ENCODE measurements at regions of chr4 and their contacts with region 1.

Region 1: DNA sequence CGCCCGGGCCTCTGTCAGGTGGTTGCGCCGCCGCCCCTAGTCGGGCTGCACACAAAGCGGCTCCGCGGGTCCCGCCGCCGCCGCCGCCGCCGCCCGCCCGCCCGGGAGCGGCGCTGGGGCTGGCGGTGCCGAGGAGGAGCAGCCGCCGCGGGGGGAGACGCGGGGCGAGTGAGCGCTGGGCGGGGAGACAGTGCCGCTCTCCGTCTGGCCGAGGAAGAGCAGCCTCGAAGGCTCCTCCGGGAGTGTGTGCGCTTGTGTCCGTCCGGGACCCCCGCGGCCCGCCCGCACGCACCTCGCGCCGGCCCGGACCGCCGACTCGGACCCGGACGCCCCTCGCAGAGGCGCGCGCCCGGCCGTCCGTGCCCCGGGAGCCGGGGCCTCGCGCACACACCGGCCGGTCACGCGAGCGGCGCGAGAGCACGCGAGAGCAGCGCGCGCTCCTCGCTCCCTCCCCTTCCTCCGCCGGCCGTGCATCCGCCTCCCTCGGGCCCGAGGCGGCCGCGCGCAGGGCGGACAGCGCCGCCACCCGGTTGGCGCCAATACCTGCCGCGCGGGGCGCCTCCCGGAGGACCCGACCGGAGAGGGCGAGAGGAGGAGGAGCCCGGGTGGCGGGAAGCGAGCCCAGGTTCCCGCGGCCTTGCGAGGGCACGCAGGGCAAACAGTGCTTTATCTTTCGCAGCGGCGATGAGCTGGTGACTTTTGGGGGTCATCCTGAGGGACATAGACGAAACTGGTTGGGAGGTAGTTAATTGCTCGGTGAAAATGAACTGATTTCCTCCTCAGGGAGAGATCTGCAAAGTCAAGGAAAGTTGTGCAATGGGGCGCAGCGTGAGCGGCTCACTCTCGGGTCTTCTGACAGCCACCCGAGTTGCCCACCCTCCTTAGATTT is at the start of gene PDS5A:
- DNase-seq: peak; percentile 56
- ATAC-seq: peak; percentile 82
- H3K4me3 ChIP-seq: peak within 1 kb of the TSS; percentile 93
- H3K27ac ChIP-seq: peak within 1 kb of the TSS; percentile 95
- H3K4me1 ChIP-seq: peaks cover 3% of the 10 kb centered on the region
- H3K27me3 ChIP-seq: no peaks in the 10 kb centered on the region
- CTCF ChIP-seq: peak; percentile 84 to 99 (median 94)
- EP300 ChIP-seq: no peak
- POLR2A ChIP-seq: peak; percentile 79
- RAD21 ChIP-seq: peak; percentile 69
- polyA plus RNA-seq, gene PDS5A: 13.7 to 14.1 TPM

Region 2: DNA sequence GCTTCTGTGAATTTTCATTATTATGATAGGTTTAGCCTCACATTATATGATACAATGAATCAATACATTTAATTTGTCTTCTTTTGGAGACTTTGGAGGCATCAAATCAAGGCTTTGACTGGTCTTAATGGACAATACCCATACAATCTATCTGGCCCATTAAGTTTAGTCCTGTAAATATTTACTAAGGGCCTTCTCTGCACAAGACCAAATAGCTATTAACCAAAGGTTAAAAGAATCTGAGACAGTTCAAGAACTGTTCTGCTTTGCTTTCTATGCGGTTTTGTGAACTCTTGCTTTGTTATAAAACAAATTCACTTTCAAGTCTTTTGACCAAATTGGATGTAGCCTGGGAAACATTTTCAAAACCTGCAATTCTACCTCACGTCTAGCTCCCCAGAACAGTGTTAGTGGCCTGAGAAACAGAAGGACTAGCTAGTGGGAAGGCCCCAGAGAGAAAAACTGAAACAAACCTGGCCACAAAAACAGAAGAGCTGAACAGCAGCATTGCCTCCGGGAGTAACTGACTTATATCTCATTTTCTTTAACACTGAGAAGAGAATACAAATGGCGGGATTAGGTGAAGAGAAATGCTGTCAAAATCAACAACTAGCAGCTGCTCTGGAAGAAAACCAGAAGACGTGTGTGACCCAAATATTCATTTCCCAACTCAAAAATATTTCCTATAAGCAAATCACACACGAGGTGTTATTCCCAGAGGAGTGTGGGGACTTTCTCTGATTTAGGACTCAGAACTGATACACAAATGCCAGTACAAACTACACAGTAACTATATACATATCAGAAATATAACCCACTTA is 1173.7 kb before region 1 on chr4:
- CTCF ChIA-PET with region 1: no interaction called
- POLR2A ChIA-PET with region 1: no interaction called
- RAD21 ChIA-PET with region 1: no interaction called
- SMC1A ChIA-PET with region 1: no interaction called
- in situ Hi-C with region 1: no loop called
- intact Hi-C with region 1: no loop called
- DNase-seq: peak; percentile 99
- ATAC-seq: peak; percentile 74
- H3K4me3 ChIP-seq: peak overlapping the region; percentile 41
- H3K27ac ChIP-seq: peak overlapping the region; percentile 86
- H3K4me1 ChIP-seq: peaks cover 20% of the 10 kb centered on the region
- H3K27me3 ChIP-seq: no peaks in the 10 kb centered on the region
- CTCF ChIP-seq: no peak
- EP300 ChIP-seq: peak; percentile 77 to 92; a peak in 3 of 4 replicates
- POLR2A ChIP-seq: no peak
- RAD21 ChIP-seq: peak; percentile 15

Region 3: DNA sequence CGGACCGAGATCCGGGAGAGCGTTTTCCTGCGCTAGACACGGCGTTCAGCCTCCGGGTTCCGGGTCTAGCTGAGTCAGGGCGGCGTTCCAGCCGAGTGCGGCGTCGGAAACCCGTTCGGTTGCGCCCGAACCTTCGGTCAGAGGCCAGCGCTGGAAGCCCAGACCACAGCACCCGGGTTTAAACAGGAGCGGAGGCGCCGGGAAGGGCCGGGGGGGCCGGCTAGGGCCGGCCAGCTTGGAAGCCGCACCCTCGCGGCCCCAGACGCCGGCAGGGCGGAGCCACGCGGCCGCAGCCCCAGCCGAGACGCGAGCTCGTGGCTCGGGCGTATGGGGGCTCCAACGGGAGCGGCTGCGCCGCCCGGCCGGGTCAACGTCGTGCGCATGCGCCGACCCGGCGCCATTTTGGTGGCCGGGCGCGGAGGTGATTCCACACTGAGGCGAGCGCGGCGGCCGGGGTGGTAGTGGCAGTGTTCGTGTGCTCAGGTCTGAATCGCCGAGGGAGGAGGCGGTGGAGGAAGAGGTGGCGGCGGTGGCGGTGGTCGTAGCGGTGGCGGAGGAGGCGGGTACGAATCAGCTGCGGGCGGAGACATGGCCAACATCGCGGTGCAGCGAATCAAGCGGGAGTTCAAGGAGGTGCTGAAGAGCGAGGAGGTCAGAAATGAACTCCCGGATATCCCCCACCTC is 279.9 kb before region 1 on chr4 and contains the start of gene UBE2K:
- CTCF ChIA-PET with region 1: interaction called, 30 read pairs
- POLR2A ChIA-PET with region 1: interaction called, 7 read pairs
- RAD21 ChIA-PET with region 1: interaction called, 8 read pairs
- SMC1A ChIA-PET with region 1: interaction called, 11 read pairs
- in situ Hi-C with region 1: no loop called
- intact Hi-C with region 1: loop called (anchors 1 kb)
- DNase-seq: no peak
- ATAC-seq: peak; percentile 94
- H3K4me3 ChIP-seq: peak within 1 kb of the TSS; percentile 96
- H3K27ac ChIP-seq: peak within 1 kb of the TSS; percentile 92
- H3K4me1 ChIP-seq: peaks cover 4% of the 10 kb centered on the region
- H3K27me3 ChIP-seq: no peaks in the 10 kb centered on the region
- CTCF ChIP-seq: no peak
- EP300 ChIP-seq: no peak
- POLR2A ChIP-seq: peak; percentile 98
- RAD21 ChIP-seq: no peak
- polyA plus RNA-seq, gene UBE2K: 54.3 to 96.4 TPM

Region 4: GRCh38 chr4:39754309-39754708 is 223.4 kb before region 1 on chr4:
- CTCF ChIA-PET with region 1: no interaction called
- POLR2A ChIA-PET with region 1: no interaction called
- RAD21 ChIA-PET with region 1: no interaction called
- SMC1A ChIA-PET with region 1: no interaction called
- in situ Hi-C with region 1: no loop called
- intact Hi-C with region 1: no loop called
- DNase-seq: no peak
- ATAC-seq: no peak; the same call in 1 of the 3 replicates
- H3K4me3 ChIP-seq: no peak overlapping the region
- H3K27ac ChIP-seq: peak overlapping the region; percentile 43; the same call in 1 of the 2 replicates
- H3K4me1 ChIP-seq: peaks cover 13% of the 10 kb centered on the region
- H3K27me3 ChIP-seq: no peaks in the 10 kb centered on the region
- CTCF ChIP-seq: no peak
- EP300 ChIP-seq: no peak
- POLR2A ChIP-seq: no peak
- RAD21 ChIP-seq: no peak

Region 5: GRCh38 chr4:39864403-39864802 is 113.3 kb before region 1 on chr4:
- CTCF ChIA-PET with region 1: interaction called, 4 read pairs
- POLR2A ChIA-PET with region 1: no interaction called
- RAD21 ChIA-PET with region 1: no interaction called
- SMC1A ChIA-PET with region 1: interaction called, 4 read pairs
- in situ Hi-C with region 1: no loop called
- intact Hi-C with region 1: loop called (anchors 10 kb)
- DNase-seq: no peak
- ATAC-seq: no peak
- H3K4me3 ChIP-seq: no peak overlapping the region
- H3K27ac ChIP-seq: no peak overlapping the region
- H3K4me1 ChIP-seq: peaks cover 8% of the 10 kb centered on the region; the same call in 1 of the 2 replicates
- H3K27me3 ChIP-seq: no peaks in the 10 kb centered on the region
- CTCF ChIP-seq: no peak
- EP300 ChIP-seq: no peak
- POLR2A ChIP-seq: no peak
- RAD21 ChIP-seq: no peak

Region 6: GRCh38 chr4:39913471-39913870 is 64.3 kb before region 1 on chr4:
- CTCF ChIA-PET with region 1: interaction called, 4 read pairs
- POLR2A ChIA-PET with region 1: no interaction called
- RAD21 ChIA-PET with region 1: no interaction called
- SMC1A ChIA-PET with region 1: interaction called, 4 read pairs
- in situ Hi-C with region 1: no loop called
- intact Hi-C with region 1: loop called (anchors 5 kb)
- DNase-seq: no peak
- ATAC-seq: no peak
- H3K4me3 ChIP-seq: no peak overlapping the region
- H3K27ac ChIP-seq: no peak overlapping the region
- H3K4me1 ChIP-seq: no peaks in the 10 kb centered on the region
- H3K27me3 ChIP-seq: no peaks in the 10 kb centered on the region
- CTCF ChIP-seq: no peak
- EP300 ChIP-seq: no peak
- POLR2A ChIP-seq: no peak
- RAD21 ChIP-seq: no peak

Region 7: DNA sequence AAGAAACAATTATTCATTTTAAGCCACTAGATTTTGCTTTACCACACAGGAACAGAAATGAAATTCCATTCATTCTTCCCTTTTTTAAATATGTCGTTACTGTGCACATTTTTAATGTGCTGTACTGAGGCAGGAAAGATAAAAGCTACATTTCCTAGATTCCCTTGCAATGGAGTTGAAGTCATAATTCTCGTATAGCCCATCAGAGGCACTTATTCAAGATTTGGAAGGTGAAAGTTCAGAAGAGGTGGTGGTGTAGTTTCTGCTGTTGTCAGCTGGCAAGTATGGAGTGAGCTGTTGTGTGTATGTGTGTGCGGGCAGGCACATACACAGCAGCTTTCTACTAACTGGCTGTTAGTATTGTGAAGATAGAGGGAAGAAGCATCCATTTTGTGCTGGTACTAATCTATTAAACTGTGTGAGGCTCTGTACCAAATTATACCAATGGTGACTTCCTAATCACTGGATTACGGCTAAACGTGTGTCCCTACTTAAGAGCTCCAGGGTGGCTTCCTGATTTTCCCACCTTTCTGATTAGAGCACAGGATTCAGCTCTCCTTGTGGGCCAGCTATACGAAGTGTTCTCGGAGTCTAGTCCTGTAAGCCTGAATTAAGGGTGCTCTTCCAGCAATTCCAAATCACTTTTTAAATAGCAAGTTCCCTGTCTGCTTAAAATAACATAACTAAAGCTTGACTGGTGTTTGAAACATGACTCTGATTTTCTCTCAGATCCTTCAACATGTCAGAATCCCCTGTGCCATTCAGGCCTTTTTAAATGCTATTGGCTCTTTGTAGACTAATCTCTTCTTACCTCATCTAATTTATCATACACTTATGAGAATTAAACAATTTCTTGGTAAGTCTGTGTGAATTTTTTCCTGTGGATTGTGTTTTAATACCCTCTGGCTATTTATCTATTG is 43.8 kb before region 1 on chr4:
- CTCF ChIA-PET with region 1: interaction called, 7 read pairs
- POLR2A ChIA-PET with region 1: no interaction called
- RAD21 ChIA-PET with region 1: interaction called, 3 read pairs
- SMC1A ChIA-PET with region 1: interaction called, 14 read pairs
- in situ Hi-C with region 1: no loop called
- intact Hi-C with region 1: loop called (anchors 2 kb)
- DNase-seq: no peak
- ATAC-seq: peak; percentile 33
- H3K4me3 ChIP-seq: 0 out of 2 replicates have a peak overlapping the region, but pooled peaks have one; percentile 25
- H3K27ac ChIP-seq: peak overlapping the region; percentile 1; the same call in 1 of the 2 replicates
- H3K4me1 ChIP-seq: peaks cover 32% of the 10 kb centered on the region
- H3K27me3 ChIP-seq: no peaks in the 10 kb centered on the region
- CTCF ChIP-seq: no peak
- EP300 ChIP-seq: no peak
- POLR2A ChIP-seq: no peak
- RAD21 ChIP-seq: no peak

Region 8: DNA sequence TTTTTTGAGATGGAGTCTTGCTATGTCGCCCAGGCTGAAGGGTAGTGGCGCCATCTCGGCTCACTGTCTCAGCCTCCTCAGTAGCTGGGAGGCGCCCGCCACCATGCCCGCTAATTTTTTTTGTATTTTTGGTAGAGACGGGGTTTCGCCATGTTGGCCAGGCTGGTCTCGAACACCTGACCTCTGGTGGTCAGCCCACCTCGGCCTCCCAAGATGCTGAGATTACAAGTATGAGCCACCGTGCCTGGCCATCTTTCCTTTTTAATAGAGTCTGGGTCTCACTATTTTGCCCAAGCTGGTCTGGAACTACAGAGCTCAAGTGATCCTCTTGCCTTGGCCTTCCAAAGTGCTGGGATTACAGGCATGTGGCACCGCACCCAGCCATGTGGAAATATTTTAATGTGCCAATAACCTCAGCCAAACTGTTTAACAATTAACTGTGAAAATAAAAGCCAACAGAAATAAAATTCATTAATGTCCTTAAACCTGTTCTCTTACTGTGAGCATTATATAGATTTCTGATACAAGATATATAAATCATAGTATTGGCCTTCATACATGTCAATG is 16.3 kb before region 1 on chr4:
- CTCF ChIA-PET with region 1: interaction called, 6 read pairs
- POLR2A ChIA-PET with region 1: interaction called, 3 read pairs
- RAD21 ChIA-PET with region 1: interaction called, 10 read pairs
- SMC1A ChIA-PET with region 1: interaction called, 5 read pairs
- in situ Hi-C with region 1: no loop called
- intact Hi-C with region 1: no loop called
- DNase-seq: no peak
- ATAC-seq: no peak
- H3K4me3 ChIP-seq: no peak overlapping the region
- H3K27ac ChIP-seq: no peak overlapping the region
- H3K4me1 ChIP-seq: peaks cover 14% of the 10 kb centered on the region
- H3K27me3 ChIP-seq: no peaks in the 10 kb centered on the region
- CTCF ChIP-seq: no peak
- EP300 ChIP-seq: no peak
- POLR2A ChIP-seq: no peak
- RAD21 ChIP-seq: no peak

Region 9: DNA sequence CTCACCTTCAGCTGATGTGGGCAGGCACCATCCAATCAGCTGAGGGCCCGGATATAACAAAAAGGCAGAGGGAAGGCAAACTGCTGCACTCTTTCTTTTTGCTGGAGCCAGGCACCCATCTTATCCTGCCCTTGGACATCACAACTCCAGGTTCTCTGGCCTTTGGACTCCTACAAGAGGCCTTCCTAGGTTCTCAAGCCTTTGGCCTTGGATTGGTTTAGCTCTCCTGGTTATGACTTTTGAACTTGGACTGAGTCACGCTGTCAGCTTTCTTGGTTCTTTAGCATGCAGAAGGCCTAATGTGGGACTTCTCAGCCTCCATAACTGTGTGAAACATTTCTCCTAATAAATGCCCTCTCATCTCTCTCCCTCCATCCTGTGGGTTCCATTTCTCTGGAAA is 55.9 kb after region 1 on chr4:
- CTCF ChIA-PET with region 1: no interaction called
- POLR2A ChIA-PET with region 1: no interaction called
- RAD21 ChIA-PET with region 1: no interaction called
- SMC1A ChIA-PET with region 1: no interaction called
- in situ Hi-C with region 1: no loop called
- intact Hi-C with region 1: no loop called
- DNase-seq: no peak
- ATAC-seq: no peak
- H3K4me3 ChIP-seq: no peak overlapping the region
- H3K27ac ChIP-seq: no peak overlapping the region
- H3K4me1 ChIP-seq: no peaks in the 10 kb centered on the region
- H3K27me3 ChIP-seq: no peaks in the 10 kb centered on the region
- CTCF ChIP-seq: no peak
- EP300 ChIP-seq: no peak
- POLR2A ChIP-seq: no peak
- RAD21 ChIP-seq: no peak

Measured in GM12878 (cell line).